ENCODE measurements at regions of chr10 and their contacts with region 1.

Region 1: GRCh38 chr10:73879296-73880173 is 5.2 kb upstream of the CAMK2G start:
- DNase-seq: peak; percentile 62 to 98 (median 86)
- ATAC-seq: peak; percentile 91
- H3K4me3 ChIP-seq: no peak overlapping the region
- H3K27ac ChIP-seq: no peak overlapping the region
- H3K4me1 ChIP-seq: peaks cover 3 to 31% of the 10 kb centered on the region in 2 donors
- H3K27me3 ChIP-seq: no peaks in the 10 kb centered on the region
- CTCF ChIP-seq: peak; percentile 86 to 98

Region 2: DNA sequence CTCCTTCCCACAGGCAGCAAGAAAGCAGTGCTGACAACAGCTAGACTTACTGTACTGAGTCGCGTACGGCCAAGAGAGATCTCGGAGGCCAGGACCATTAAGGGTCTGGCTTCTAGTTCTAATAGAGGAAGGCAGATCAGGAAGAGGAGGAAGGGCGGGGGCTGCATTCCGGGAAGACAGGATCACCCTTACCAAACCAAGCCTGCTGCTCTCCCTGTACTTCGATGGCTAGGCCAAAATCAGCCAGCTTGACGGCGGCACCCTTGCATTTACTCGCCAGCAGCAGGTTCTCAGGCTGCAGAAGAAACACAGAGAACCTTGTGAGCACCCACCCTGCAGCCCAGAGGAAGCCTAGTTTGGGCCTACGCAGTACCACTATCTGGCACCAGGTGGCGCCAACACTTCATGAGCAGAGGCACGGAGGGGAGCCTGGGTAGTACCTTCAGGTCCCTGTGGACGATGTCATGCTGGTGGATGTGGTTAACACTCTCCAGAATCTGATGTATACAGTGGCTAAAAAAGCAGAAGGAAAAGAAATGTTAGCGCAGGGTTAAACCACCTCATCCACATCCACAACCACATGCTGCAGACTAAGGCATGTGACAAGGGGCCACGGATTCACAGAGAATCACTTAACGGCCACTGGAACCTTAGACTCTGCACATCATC is 30.6 kb before region 1 on chr10:
- intact Hi-C with region 1: loop called in 1 of 2 experiments (anchors 2 kb)
- DNase-seq: peak; percentile 60 to 93 (median 78)
- ATAC-seq: peak; percentile 87
- H3K4me3 ChIP-seq: no peak overlapping the region
- H3K27ac ChIP-seq: peak overlapping the region in 1 of 2 donors; percentile 70
- H3K4me1 ChIP-seq: peaks cover 2 to 32% of the 10 kb centered on the region in 2 donors
- H3K27me3 ChIP-seq: no peaks in the 10 kb centered on the region
- CTCF ChIP-seq: peak; percentile 100

Measured in left lung (tissue), 14 donors.